HCT116 (cell line): ENCODE measurements at regions of chr1 and their contacts with region 1.

Region 1: DNA sequence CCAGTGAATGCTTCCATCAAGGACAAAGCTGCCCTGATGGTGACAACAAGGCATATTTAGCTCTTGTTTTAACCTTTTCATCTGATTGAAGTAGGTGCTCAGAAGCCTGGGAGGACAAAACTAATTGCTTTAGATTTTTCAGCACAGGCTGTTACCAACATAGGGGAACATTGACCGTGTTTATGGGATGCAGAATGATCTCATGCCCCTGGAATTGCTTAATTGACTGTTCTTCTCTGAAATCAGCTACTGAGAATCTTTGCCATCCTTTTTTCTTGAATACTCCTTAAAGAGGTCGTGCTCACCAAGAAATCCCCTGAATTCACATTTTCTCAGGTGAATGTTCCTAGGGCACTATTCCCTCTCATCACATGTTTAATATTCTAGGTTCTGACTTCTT is 95.9 kb upstream of the CCDC190 start:
- DNase-seq: no peak
- ATAC-seq: no peak
- H3K4me3 ChIP-seq: no peak overlapping the region
- H3K27ac ChIP-seq: no peak overlapping the region
- H3K4me1 ChIP-seq: no peaks in the 10 kb centered on the region
- H3K27me3 ChIP-seq: no peaks in the 10 kb centered on the region
- CTCF ChIP-seq: no peak
- POLR2A ChIP-seq: no peak
- RAD21 ChIP-seq: no peak

Region 2: GRCh38 chr1:162612606-162613400 is 344.1 kb before region 1 on chr1:
- CTCF ChIA-PET with region 1: no interaction called
- POLR2A ChIA-PET with region 1: no interaction called
- RAD21 ChIA-PET with region 1: no interaction called
- intact Hi-C with region 1: no loop called
- DNase-seq: no peak
- ATAC-seq: 0 out of 2 replicates have a peak, but pooled peaks have one; percentile 9
- H3K4me3 ChIP-seq: no peak overlapping the region
- H3K27ac ChIP-seq: no peak overlapping the region
- H3K4me1 ChIP-seq: no peaks in the 10 kb centered on the region
- H3K27me3 ChIP-seq: no peaks in the 10 kb centered on the region
- CTCF ChIP-seq: no peak
- POLR2A ChIP-seq: no peak
- RAD21 ChIP-seq: no peak

Region 3: DNA sequence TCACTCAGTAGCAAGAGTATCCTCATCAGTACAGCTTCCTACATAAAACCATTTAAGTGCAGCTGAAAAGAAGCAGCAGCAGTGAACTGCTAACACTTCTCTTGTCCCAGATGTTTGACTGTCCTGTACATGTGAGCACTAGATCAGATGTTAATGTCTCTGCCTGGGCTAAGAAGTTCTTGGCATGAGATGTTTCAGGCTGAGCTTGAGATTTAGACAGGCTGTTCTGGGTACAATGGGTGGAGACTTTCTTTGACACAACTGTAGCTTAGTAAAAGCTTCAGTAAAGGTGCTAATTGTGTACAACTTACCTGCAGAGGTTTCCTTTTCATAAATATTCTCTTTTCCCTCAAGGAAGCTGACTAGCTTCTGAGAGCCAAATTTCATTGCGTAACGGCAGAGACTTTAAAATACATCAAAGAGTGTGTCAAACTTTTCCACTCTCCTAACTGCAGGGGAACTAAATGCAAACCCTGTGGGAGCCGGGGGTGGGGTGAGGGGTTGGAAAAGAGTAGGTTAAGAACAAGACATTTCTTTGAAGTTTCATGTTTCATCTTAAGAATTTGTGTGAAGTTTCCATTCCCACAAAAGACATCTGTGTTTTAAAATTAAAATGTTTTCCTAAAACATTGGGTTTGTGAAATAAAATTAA is 13.9 kb before region 1 on chr1:
- CTCF ChIA-PET with region 1: no interaction called
- POLR2A ChIA-PET with region 1: no interaction called
- RAD21 ChIA-PET with region 1: no interaction called
- intact Hi-C with region 1: no loop called
- DNase-seq: no peak
- ATAC-seq: no peak
- H3K4me3 ChIP-seq: no peak overlapping the region
- H3K27ac ChIP-seq: no peak overlapping the region
- H3K4me1 ChIP-seq: no peaks in the 10 kb centered on the region
- H3K27me3 ChIP-seq: no peaks in the 10 kb centered on the region
- CTCF ChIP-seq: no peak
- POLR2A ChIP-seq: no peak
- RAD21 ChIP-seq: no peak

Region 4: GRCh38 chr1:162996261-162996660 is 39.3 kb after region 1 on chr1:
- CTCF ChIA-PET with region 1: no interaction called
- POLR2A ChIA-PET with region 1: no interaction called
- RAD21 ChIA-PET with region 1: no interaction called
- intact Hi-C with region 1: loop called (anchors 1 kb)
- DNase-seq: no peak
- ATAC-seq: no peak
- H3K4me3 ChIP-seq: no peak overlapping the region
- H3K27ac ChIP-seq: no peak overlapping the region
- H3K4me1 ChIP-seq: no peaks in the 10 kb centered on the region
- H3K27me3 ChIP-seq: no peaks in the 10 kb centered on the region
- CTCF ChIP-seq: no peak
- POLR2A ChIP-seq: no peak
- RAD21 ChIP-seq: no peak